ENCODE measurements at regions of chr13 and their contacts with region 1.

Region 1: DNA sequence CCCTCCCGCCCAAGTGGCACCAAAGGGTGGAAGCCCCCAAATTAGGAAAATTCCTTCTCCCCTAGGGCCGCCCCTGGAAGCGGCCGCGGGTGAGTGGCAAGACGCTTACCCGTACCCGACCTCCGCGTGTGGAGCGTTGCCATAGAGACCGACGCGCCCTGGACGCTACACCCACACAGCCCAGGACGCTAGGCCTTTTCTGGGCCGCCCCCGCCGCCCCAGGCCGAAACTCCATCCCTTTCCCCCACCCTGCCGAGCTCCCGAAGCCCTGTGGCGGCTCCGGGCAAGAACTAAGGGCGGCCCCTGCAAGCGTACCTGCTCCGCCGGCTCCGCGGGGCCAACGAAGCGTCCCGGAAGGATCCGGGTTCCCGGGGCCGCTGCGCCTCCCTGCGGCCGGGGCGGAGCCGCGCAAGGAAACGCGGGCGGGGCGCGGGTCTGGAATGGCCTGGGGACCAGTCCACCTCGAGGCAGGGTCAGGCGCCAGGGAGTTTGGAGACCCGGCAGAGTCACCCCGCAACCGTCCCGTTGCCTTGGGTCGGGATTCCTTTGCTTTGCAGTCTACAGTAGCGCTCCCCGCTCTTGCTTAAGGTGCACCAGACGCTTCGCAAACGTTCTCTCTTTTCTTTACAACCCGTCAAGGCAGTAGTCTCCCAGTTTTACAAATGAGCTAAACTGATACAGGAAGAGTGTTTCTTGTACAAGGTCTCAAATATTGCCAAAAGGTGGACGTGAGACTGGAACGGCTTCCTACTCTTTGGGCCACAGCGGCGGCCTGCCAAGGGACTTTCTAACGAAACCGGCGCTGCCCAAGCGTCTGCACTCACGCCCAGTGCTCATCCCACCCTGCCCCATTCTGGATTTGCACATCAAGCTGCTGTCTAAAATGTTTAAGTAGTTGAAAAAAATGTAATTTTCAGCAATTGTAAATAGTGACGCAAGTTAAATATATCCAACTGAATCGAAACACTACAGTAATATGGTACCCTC is at the start of gene NEK5:
- DNase-seq: no peak
- H3K4me3 ChIP-seq: peak within 1 kb of the TSS; percentile 67
- CTCF ChIP-seq: peak; percentile 83

Region 2: DNA sequence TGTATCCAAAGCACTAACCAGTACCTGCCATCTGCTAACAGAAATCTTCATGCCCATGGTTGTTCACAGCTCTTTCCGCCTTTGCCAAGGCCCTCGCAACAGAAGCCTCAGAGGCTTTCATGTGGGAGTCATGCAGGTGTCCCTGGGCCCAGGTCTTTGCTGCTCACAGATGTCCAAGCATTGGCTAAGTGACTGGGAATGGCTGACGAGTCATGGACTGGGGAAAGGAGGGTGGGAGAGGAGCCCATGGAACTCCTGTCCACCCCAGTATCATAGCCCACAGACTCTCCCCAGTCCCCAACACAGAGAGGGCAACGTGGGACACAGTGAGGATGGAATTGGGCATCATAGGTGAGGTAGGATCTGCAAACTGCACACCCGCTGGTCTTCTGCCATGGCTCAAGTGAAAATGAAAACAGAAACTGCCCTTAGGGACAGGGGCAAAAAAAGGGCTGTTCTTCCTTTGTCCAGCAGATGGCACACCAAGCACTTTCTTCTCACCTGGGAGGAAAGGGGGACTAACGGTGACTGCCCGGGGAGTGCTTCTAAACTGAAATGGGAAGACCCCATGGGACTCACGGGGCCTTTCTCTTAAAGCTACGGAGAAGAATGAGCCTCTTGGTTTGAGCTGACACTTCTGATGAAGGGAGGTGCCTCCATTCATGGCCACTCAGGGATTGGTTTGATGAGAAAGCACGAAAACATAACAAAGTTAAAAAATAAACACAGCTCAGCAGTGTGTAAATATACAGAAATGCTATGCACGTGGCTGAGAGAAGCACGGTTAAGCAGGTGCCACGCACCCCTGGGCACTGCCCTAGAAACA is 314.0 kb before region 1 on chr13:
- CTCF ChIA-PET with region 1: interaction called, 115 read pairs
- POLR2A ChIA-PET with region 1: no interaction called
- DNase-seq: no peak
- H3K4me3 ChIP-seq: peak overlapping the region; percentile 45
- CTCF ChIP-seq: peak; percentile 74

Region 3: DNA sequence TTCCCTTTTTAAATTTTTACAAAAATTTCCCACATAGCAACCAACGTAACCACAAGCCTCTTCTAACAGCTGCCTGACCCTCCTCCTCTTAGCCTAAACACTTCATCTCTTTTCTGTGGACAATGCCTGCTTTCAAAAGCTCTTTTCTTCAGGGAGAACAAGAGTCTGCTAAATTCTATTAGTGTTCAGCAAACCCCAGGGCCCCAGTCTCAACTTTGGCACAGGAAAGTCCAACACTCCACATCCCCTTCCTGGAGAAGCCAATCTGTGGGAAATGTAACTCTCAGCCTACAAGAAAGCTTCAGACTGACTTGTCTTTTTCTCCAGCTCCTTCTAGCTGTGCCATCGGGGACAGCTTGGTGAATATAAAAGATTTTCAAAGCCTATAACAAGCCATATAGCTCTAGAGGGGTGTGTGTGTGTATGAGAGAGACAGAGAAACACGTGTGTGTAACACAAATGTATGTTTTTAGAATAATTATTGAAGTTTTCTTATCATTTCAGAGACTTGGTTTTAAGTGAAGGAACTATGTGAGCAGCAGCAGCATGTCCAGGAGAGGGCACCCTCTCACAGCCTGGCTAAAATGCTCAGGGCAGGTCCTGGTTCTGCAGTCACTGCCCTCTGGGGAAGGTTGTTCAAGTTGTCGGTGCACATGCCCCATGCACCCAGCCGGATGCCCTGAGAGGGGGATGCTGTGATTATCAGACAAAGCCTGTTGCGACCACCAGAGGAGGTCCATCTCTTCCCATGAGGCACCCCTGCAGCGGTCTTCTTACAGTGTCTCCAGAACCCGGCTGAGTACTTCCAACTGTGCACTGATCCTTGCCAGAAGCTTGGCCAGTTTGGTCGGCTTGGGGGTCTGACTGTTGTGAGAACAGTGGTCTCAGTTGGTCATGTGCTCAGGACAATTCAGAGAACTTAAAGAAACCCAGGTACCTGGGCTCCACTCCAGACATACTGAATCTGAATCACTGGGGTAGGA is 232.8 kb before region 1 on chr13:
- CTCF ChIA-PET with region 1: interaction called, 83 read pairs
- POLR2A ChIA-PET with region 1: no interaction called
- DNase-seq: peak; percentile 21
- H3K4me3 ChIP-seq: no peak overlapping the region
- CTCF ChIP-seq: peak; percentile 78

Region 4: GRCh38 chr13:52001120-52001731 is 127.8 kb before region 1 on chr13:
- CTCF ChIA-PET with region 1: interaction called, 61 read pairs
- POLR2A ChIA-PET with region 1: no interaction called
- DNase-seq: no peak
- H3K4me3 ChIP-seq: no peak overlapping the region
- CTCF ChIP-seq: peak; percentile 39

Region 5: DNA sequence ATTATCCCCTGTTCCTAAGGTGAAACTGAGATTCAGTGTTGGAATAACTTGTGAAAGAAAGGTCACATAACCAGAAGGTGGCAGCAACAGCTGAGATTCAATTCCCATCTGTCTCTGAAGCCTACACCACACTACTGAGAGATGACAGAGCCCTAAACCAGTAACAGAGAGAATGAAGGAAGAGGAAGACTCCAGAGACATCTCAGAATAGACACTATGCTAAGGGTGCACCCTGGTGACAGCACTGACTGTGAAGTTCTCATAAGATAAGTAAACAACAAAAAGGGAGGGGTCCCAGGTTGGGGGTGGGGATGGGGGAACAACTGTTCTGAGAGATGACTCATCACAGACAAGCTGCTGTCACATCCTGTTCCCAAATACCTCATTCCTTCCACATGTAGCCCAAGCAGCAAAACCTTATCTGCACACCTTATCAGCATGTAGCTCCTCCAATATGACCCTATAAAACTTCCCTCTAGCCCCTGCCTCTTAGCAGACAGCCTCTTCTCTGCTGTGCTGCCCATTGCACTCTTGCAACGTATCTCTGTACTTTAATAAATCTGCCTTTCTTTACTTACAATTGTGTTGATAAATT is 58.0 kb before region 1 on chr13:
- CTCF ChIA-PET with region 1: interaction called, 16 read pairs
- POLR2A ChIA-PET with region 1: no interaction called
- DNase-seq: no peak
- H3K4me3 ChIP-seq: no peak overlapping the region
- CTCF ChIP-seq: peak; percentile 18

Region 6: DNA sequence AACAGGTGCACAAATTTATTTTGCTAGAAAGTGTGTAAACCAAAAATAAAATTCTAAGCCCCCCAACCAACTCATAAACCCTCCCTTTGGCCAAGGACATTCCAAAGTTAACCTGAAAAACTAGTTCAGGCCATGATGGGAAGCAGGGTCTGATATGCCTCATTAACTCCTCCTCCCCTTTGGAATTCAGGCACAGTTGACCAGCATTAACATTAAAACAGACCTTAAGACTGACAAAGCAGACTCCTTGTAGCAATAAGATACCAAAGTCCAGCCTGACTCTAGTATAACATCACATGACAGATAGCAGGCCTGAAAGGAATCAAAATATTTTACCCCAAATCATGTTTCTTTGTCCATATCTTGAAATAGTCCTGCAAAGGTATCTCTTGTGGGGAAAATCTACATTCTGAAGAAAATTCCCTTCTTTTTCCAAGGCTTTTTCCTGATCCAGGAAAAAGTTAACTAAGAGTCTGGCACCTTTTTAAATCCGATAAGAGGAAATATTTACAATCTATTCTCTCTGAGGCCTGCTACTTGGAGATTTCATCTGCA is 19.8 kb before region 1 on chr13:
- CTCF ChIA-PET with region 1: interaction called, 10 read pairs
- POLR2A ChIA-PET with region 1: no interaction called
- DNase-seq: no peak
- H3K4me3 ChIP-seq: no peak overlapping the region
- CTCF ChIP-seq: no peak

Region 7: DNA sequence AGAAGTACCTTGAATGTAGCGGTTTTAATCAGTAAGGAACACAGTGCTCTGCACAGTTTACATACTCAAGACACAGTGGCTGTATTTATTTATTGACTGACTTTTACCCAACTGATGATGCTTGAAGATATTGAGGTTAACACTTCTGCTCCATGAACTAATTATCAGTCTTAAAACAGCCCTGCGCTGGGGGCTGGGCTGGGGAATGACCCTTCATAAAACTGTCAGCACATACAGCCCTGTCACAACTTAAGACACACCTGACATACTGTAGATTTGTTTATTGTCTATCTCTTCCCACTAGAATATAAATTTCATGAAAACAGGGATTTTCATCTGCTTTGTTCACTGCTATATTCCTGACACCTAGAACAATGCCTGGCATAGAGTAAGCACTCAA is 10.9 kb before region 1 on chr13:
- CTCF ChIA-PET with region 1: interaction called, 11 read pairs
- POLR2A ChIA-PET with region 1: no interaction called
- DNase-seq: no peak
- H3K4me3 ChIP-seq: no peak overlapping the region
- CTCF ChIP-seq: no peak

Region 8: DNA sequence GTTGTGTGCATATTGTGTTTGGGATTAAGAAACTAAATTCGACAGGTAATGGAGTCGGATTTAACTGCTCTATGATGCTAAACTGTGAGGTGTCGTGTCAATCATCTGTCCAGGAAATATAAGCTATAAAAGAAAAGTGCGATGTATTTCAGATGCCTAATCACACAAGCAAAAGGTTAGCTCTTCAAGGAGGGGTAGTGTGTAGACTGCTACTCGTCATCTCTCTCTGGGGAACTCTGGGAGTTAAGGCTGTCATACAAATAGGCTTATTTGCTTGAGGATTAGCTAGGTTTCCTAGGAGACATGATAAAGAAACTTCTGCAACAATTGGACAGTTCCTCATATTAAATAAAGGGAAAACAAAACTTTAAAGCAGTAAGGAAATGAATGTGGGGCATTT is 1361.7 kb after region 1 on chr13:
- CTCF ChIA-PET with region 1: no interaction called
- POLR2A ChIA-PET with region 1: no interaction called
- DNase-seq: no peak
- H3K4me3 ChIP-seq: no peak overlapping the region
- CTCF ChIP-seq: no peak

Measured in AG04449 (cell line).